HEK293T (cell line): ENCODE measurements at regions of chr17 and their contacts with region 1.

Region 1: DNA sequence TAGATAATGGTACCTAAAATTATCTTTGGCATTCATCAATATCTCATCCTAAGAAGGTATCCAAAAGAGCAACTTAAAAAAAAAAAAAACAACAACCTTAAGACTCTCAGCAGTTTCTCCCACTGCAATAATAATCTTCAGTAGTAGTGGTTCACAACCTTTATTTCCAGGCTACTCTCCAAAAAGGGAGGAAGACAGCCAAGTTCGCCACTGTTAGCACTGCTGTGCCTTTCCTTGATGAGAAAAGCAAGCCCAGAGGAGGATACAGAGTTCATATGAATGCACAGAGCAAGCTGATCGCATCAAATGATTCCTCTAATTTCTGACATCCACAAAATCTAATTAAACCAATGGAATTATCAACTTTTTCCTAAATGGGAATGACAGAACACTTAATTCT is 199.4 kb downstream of the AATF start:
- DNase-seq: no peak

Region 2: GRCh38 chr17:37190493-37190892 is 42.3 kb after region 1 on chr17:
- CTCF ChIA-PET with region 1: interaction called, 10 read pairs
- POLR2A ChIA-PET with region 1: no interaction called
- DNase-seq: no peak